Colonic mucosa (tissue), 4 donors: ENCODE measurements at regions of chr7 and their contacts with region 1.

Region 1: GRCh38 chr7:108114117-108114841 is 15.9 kb downstream of the LAMB4 start:
- DNase-seq: no peak
- H3K4me3 ChIP-seq: no peak overlapping the region
- H3K27ac ChIP-seq: no peak overlapping the region
- H3K4me1 ChIP-seq: no peaks in the 10 kb centered on the region
- H3K27me3 ChIP-seq: no peaks in the 10 kb centered on the region
- CTCF ChIP-seq: peak; percentile 46

Region 2: GRCh38 chr7:107078517-107078966 is 1035.7 kb before region 1 on chr7:
- intact Hi-C with region 1: no loop called
- DNase-seq: no peak
- H3K4me3 ChIP-seq: no peak overlapping the region
- H3K27ac ChIP-seq: no peak overlapping the region
- H3K4me1 ChIP-seq: no peaks in the 10 kb centered on the region
- H3K27me3 ChIP-seq: no peaks in the 10 kb centered on the region
- CTCF ChIP-seq: no peak

Region 3: DNA sequence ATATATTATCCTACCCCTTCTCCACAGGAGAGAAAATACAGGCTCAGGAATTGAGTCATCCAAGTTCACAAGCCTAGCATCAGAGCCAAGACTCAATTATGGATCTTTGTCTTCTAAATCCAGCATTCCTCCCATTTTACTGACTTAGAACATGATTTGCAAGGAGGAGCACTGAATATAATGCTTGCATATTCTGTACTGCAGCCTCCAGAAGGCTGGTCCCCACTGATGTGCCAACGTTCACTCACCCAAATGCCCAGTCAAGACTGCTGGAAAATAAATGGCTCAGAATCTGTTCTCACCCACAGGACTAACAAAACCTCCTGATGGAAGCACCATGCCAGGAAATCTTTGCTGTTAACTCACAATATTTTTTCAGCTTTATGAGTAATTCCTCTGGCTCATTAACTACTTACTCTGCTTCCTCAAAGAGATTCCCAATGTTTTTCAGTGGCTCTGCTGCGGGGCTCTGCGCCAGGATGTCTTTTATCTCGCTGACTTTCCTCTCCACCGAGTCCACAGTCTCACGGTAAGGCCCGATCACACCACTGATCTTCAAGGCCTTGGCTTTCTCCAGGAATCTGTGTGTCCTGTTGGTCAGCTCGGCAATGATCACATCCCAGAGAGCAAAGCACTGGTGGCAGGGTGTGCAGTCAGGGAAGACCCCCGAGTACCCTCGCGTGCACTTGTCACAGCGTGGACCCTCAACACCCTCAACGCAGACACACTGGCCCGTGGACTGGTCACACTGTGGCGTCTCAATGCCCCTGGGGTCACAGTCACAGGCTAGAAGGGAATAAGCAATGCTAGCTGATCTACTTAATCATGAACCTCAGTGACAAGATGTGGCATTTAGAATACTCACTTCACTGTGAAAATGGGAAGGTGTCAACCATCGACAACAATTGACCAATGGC is 174.4 kb before region 1 on chr7:
- intact Hi-C with region 1: no loop called
- DNase-seq: no peak
- H3K4me3 ChIP-seq: no peak overlapping the region
- H3K27ac ChIP-seq: peak overlapping the region; percentile 55
- H3K4me1 ChIP-seq: no peaks in the 10 kb centered on the region
- H3K27me3 ChIP-seq: no peaks in the 10 kb centered on the region
- CTCF ChIP-seq: no peak

Region 4: DNA sequence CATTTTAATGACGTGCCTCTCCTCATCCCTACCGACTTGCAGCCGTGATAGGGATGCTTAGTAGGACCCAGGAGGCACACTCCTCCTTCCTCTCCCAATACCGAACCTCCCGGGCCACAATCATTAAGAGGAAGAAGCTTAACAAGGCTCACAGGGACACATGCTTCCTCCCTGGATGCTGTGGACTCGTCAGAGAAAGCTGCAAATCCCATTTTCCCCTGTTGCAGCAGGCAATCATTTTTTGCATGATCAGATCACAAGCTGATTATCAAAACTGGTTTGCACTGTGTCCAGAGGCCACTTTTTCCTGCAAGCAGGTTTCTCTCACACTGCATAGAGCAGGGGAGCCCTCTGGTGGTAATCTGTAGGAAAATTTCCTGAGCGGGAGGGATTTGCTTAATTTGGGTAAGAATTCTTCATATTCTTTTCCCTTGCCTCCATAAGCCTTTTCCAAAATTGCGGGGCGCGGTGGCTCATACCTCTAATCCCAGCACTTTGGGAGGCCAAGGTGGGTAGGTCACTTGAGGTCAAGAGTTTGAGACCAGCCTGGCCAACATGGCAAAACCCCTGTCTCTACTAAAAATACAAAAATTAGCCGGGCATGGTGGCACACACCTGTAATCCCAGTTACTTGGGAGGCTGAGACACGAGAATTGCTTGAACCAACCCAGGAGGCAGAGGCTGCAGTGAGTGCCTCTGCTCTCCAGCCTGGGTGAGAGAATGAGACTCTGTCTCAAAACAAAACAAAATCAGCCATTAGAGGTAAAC is 32.0 kb after region 1 on chr7:
- intact Hi-C with region 1: loop called (anchors 5 kb)
- DNase-seq: peak; percentile 75
- H3K4me3 ChIP-seq: no peak overlapping the region
- H3K27ac ChIP-seq: no peak overlapping the region
- H3K4me1 ChIP-seq: no peaks in the 10 kb centered on the region
- H3K27me3 ChIP-seq: no peaks in the 10 kb centered on the region
- CTCF ChIP-seq: peak; percentile 85